ENCODE measurements at regions of chr6 and their contacts with region 1.

Region 1: GRCh38 chr6:151323791-151324487 is 67.4 kb downstream of the ZBTB2 start:
- DNase-seq: peak; percentile 78
- ATAC-seq: peak; percentile 91
- H3K4me3 Mint-ChIP-seq: no peak overlapping the region
- H3K27ac Mint-ChIP-seq: no peak overlapping the region
- H3K4me1 Mint-ChIP-seq: peaks cover 18% of the 10 kb centered on the region
- H3K27me3 Mint-ChIP-seq: peaks cover 35% of the 10 kb centered on the region
- CTCF ChIP-seq: peak; percentile 98

Region 2: GRCh38 chr6:150891888-150892485 is 432.0 kb before region 1 on chr6:
- CTCF ChIA-PET with region 1: interaction called, 65 read pairs
- POLR2A ChIA-PET with region 1: no interaction called
- intact Hi-C with region 1: no loop called
- DNase-seq: peak; percentile 68
- ATAC-seq: peak; percentile 75
- H3K4me3 Mint-ChIP-seq: no peak overlapping the region
- H3K27ac Mint-ChIP-seq: no peak overlapping the region
- H3K4me1 Mint-ChIP-seq: peaks cover 31% of the 10 kb centered on the region
- H3K27me3 Mint-ChIP-seq: no peaks in the 10 kb centered on the region
- CTCF ChIP-seq: peak; percentile 83

Region 3: GRCh38 chr6:151014404-151015100 is 309.4 kb before region 1 on chr6:
- CTCF ChIA-PET with region 1: interaction called, 179 read pairs
- POLR2A ChIA-PET with region 1: interaction called, 5 read pairs
- intact Hi-C with region 1: loop called (anchors 1 kb)
- DNase-seq: peak; percentile 67
- ATAC-seq: peak; percentile 78
- H3K4me3 Mint-ChIP-seq: no peak overlapping the region
- H3K27ac Mint-ChIP-seq: no peak overlapping the region
- H3K4me1 Mint-ChIP-seq: no peaks in the 10 kb centered on the region
- H3K27me3 Mint-ChIP-seq: no peaks in the 10 kb centered on the region
- CTCF ChIP-seq: peak; percentile 98

Region 4: GRCh38 chr6:151205721-151206600 is 118.0 kb before region 1 on chr6:
- CTCF ChIA-PET with region 1: interaction called, 10 read pairs
- POLR2A ChIA-PET with region 1: no interaction called
- intact Hi-C with region 1: no loop called
- DNase-seq: no peak
- ATAC-seq: no peak
- H3K4me3 Mint-ChIP-seq: no peak overlapping the region
- H3K27ac Mint-ChIP-seq: no peak overlapping the region
- H3K4me1 Mint-ChIP-seq: no peaks in the 10 kb centered on the region
- H3K27me3 Mint-ChIP-seq: peaks cover 15% of the 10 kb centered on the region
- CTCF ChIP-seq: no peak

Region 5: GRCh38 chr6:151313066-151313491 is 10.9 kb before region 1 on chr6:
- CTCF ChIA-PET with region 1: interaction called, 15 read pairs
- POLR2A ChIA-PET with region 1: no interaction called
- intact Hi-C with region 1: no loop called
- DNase-seq: no peak
- ATAC-seq: no peak
- H3K4me3 Mint-ChIP-seq: no peak overlapping the region
- H3K27ac Mint-ChIP-seq: no peak overlapping the region
- H3K4me1 Mint-ChIP-seq: no peaks in the 10 kb centered on the region
- H3K27me3 Mint-ChIP-seq: peaks cover 2% of the 10 kb centered on the region
- CTCF ChIP-seq: no peak

Region 6: GRCh38 chr6:151374036-151374683 is 50.2 kb after region 1 on chr6:
- CTCF ChIA-PET with region 1: interaction called, 14 read pairs
- POLR2A ChIA-PET with region 1: no interaction called
- intact Hi-C with region 1: no loop called
- DNase-seq: peak; percentile 35
- ATAC-seq: peak; percentile 28
- H3K4me3 Mint-ChIP-seq: peak overlapping the region; percentile 64
- H3K27ac Mint-ChIP-seq: peak overlapping the region; percentile 87
- H3K4me1 Mint-ChIP-seq: peaks cover 66% of the 10 kb centered on the region
- H3K27me3 Mint-ChIP-seq: no peaks in the 10 kb centered on the region
- CTCF ChIP-seq: no peak

Region 7: DNA sequence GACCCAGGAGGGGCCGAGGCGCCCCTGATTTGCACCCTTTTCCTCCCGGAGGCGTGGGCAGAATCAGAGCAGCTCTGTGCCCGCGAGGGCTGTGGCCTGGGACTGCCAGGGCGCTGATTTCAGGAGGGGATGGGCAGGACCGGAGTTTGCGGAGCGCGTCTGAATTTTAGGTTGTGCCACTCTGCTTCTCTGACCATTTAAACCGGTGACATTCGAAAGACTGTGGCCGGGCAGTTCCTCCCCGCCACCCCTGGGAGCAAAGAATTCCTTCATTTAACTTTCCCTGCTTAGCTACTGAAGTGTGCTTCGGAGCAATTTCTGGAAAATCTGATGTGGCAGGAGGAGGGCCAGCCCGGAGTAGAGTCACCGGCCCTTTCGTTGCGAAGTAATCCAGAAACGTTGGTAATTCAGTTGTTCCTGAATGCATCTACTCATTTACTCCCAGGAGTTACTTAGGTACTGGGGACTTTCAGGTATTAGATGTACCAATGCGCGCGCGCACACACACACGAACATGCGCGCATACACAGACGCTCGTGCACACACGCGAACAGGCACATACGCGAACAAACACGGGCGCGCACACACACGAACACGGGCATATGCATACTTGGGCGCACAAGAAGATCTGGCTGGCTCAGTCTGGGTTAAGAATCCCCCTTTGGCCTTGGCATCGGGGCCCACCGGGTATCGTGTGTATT is 170.4 kb after region 1 on chr6:
- CTCF ChIA-PET with region 1: no interaction called
- POLR2A ChIA-PET with region 1: no interaction called
- intact Hi-C with region 1: no loop called
- DNase-seq: peak; percentile 49
- ATAC-seq: peak; percentile 37
- H3K4me3 Mint-ChIP-seq: peak overlapping the region; percentile 56
- H3K27ac Mint-ChIP-seq: no peak overlapping the region
- H3K4me1 Mint-ChIP-seq: peaks cover 9% of the 10 kb centered on the region
- H3K27me3 Mint-ChIP-seq: peaks cover 39% of the 10 kb centered on the region
- CTCF ChIP-seq: no peak